ENCODE measurements at regions of chr5 and their contacts with region 1.

Region 1: DNA sequence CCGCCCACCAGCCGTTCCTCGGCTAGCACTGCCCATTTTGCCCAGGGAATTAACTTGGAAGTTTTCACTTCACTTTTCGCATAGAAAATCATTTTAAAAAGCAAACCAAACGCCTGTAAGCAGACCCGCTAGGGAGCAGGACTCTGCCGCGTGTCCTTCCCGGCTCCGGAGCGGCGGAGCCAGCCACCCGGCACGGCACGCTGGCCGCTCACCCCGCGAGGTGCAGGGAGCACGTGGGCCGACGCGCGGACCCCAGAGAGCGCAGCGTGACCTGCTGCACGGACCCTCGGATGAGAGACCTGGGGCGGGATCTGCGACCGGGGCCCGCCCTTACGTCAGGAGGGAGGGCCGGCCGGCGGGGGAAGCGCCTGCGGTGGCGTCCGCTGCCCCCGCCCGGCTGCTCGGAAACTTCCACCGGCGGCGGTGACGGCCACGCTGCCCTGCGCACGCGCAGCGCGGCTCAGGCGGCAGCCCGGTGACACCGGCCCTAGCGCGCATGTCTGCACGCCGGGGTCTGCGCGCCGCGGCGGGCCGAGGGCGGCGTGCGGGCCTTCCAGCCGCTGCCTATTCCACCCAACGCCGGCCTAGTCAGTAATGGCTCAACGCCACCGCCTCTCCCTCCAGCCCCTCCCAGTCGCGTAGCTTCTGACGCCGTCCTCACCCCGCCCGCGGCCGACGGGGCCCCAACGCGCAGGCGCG is 506 bp upstream of the TENT4A start:
- DNase-seq: peak; percentile 98
- H3K4me3 Mint-ChIP-seq: peak overlapping the region; percentile 85
- H3K27ac Mint-ChIP-seq: peak overlapping the region; percentile 92
- H3K4me1 Mint-ChIP-seq: peaks cover 41% of the 10 kb centered on the region
- H3K27me3 Mint-ChIP-seq: peaks cover 6% of the 10 kb centered on the region

Region 2: DNA sequence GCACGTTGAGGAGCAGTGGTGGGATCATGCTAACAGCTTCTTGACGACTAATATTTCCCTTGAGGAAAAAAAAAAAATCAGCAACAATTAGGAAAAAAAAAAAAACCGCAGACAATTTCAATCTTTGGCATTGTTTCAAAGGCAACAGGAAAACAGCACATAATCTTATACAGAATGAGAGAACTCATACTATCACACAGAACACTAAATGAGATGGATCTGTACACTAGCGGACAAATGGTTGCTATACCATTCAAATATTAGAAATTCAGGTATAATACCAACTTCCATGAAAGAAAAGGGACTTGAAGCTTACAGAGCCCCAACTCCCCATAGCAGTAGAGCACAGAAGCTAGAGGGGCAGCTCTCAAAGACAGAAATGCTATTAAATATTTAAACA is 89.5 kb before region 1 on chr5:
- CTCF ChIA-PET with region 1: no interaction called
- POLR2A ChIA-PET with region 1: no interaction called
- DNase-seq: no peak
- H3K4me3 Mint-ChIP-seq: no peak overlapping the region
- H3K27ac Mint-ChIP-seq: no peak overlapping the region
- H3K4me1 Mint-ChIP-seq: peaks cover 11% of the 10 kb centered on the region
- H3K27me3 Mint-ChIP-seq: no peaks in the 10 kb centered on the region

Region 3: DNA sequence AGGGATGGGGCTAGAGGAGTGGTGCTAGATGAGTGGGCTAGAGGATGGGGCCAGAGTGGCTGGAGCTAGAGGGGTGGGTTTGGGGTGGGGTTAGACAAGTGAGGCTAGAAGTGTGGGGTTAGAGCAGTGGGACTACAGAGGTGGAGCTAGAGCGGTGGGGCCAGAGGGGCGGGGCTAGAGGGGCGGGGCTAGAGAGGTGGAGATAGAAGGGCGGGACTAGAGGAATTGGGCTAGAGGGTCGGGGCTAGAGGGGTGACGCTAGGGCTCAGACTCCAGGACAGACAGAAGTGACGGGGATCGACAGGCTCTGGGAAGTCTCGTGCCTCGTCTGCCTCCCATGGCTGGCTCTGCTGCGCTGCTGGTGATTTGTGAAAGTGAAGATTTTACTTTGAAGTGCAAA is 30.5 kb before region 1 on chr5:
- CTCF ChIA-PET with region 1: no interaction called
- POLR2A ChIA-PET with region 1: no interaction called
- DNase-seq: no peak
- H3K4me3 Mint-ChIP-seq: no peak overlapping the region
- H3K27ac Mint-ChIP-seq: no peak overlapping the region
- H3K4me1 Mint-ChIP-seq: no peaks in the 10 kb centered on the region
- H3K27me3 Mint-ChIP-seq: peaks cover 27% of the 10 kb centered on the region

Region 4: GRCh38 chr5:6692906-6693305 is 19.8 kb before region 1 on chr5:
- CTCF ChIA-PET with region 1: no interaction called
- POLR2A ChIA-PET with region 1: no interaction called
- DNase-seq: no peak
- H3K4me3 Mint-ChIP-seq: no peak overlapping the region
- H3K27ac Mint-ChIP-seq: no peak overlapping the region
- H3K4me1 Mint-ChIP-seq: no peaks in the 10 kb centered on the region
- H3K27me3 Mint-ChIP-seq: peaks cover 37% of the 10 kb centered on the region

Region 5: GRCh38 chr5:6728011-6728794 is 15.5 kb after region 1 on chr5:
- CTCF ChIA-PET with region 1: no interaction called
- POLR2A ChIA-PET with region 1: interaction called, 29 read pairs
- DNase-seq: no peak
- H3K4me3 Mint-ChIP-seq: no peak overlapping the region
- H3K27ac Mint-ChIP-seq: no peak overlapping the region
- H3K4me1 Mint-ChIP-seq: peaks cover 77% of the 10 kb centered on the region
- H3K27me3 Mint-ChIP-seq: no peaks in the 10 kb centered on the region

Measured in activated CD4-positive, alpha-beta memory T cell treated with anti-CD3 and anti-CD28 coated beads, Interleukin-2, amount 10 ng/mL, durations not matched to agents 7 days and 5 days (primary cell).